CD14-positive monocyte (primary cell): ENCODE measurements at regions of chr19 and their contacts with region 1.

Region 1: GRCh38 chr19:39671738-39672363 is 16.1 kb downstream of the LGALS16 start:
- DNase-seq: peak; percentile 24 to 51 (median 38)
- H3K4me3 ChIP-seq: no peak overlapping the region
- H3K4me3 Mint-ChIP-seq: no peak overlapping the region
- H3K27ac ChIP-seq: no peak overlapping the region
- H3K27ac Mint-ChIP-seq: no peak overlapping the region
- H3K4me1 ChIP-seq: no peaks in the 10 kb centered on the region
- H3K4me1 Mint-ChIP-seq: peaks cover 3% of the 10 kb centered on the region
- H3K27me3 ChIP-seq: peaks cover 4 to 10% of the 10 kb centered on the region in 2 donors
- H3K27me3 Mint-ChIP-seq: peaks cover 3 to 11% (median 9%) of the 10 kb centered on the region in 3 donors
- CTCF ChIP-seq: peak; percentile 52

Region 2: DNA sequence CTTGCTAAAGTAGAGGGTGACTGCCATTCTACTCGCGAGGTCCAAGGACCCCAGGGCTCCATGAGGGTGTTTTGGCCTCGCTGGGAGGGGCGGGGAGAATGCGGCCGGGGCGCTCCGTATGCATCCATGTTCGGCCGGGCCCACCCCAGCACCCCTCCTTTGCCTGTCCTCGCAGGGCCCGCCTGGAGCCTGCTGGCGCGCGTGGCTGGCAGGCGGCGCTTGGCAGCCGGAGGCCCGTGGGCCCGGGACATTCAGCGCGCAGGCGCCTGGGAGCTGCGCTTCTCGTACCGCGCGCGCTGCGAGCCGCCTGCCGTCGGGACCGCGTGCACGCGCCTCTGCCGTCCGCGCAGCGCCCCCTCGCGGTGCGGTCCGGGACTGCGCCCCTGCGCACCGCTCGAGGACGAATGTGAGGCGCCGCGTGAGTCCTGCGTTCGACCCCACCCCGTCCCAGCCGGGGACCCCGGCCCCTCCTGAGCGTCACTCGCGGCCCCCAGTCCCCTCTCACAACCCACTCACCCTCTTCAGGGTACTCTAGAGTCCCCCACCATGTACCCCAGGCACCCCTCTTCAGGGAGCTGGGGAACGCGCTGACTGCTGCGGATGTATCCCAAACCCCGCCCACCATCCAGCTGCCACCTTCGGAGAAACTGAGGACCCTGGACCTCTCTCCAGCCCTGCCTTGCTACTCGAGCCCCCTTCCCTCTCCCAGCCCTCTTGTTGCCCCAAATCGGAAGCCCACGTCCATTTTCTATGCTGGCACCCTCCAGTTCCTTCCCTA is 169.0 kb before region 1 on chr19:
- intact Hi-C with region 1: loop called in 1 of 2 experiments (anchors 10 kb)
- DNase-seq: peak; percentile 68 to 81 (median 77)
- H3K4me3 ChIP-seq: no peak overlapping the region
- H3K4me3 Mint-ChIP-seq: peak overlapping the region in 1 of 2 donors; percentile 52
- H3K27ac ChIP-seq: no peak overlapping the region
- H3K27ac Mint-ChIP-seq: no peak overlapping the region
- H3K4me1 ChIP-seq: peaks cover 10 to 15% of the 10 kb centered on the region in 2 donors
- H3K4me1 Mint-ChIP-seq: peaks cover 19% of the 10 kb centered on the region
- H3K27me3 ChIP-seq: peaks cover 36 to 78% of the 10 kb centered on the region in 2 donors
- H3K27me3 Mint-ChIP-seq: peaks cover 69 to 89% (median 77%) of the 10 kb centered on the region in 3 donors
- CTCF ChIP-seq: peak; percentile 95

Region 3: DNA sequence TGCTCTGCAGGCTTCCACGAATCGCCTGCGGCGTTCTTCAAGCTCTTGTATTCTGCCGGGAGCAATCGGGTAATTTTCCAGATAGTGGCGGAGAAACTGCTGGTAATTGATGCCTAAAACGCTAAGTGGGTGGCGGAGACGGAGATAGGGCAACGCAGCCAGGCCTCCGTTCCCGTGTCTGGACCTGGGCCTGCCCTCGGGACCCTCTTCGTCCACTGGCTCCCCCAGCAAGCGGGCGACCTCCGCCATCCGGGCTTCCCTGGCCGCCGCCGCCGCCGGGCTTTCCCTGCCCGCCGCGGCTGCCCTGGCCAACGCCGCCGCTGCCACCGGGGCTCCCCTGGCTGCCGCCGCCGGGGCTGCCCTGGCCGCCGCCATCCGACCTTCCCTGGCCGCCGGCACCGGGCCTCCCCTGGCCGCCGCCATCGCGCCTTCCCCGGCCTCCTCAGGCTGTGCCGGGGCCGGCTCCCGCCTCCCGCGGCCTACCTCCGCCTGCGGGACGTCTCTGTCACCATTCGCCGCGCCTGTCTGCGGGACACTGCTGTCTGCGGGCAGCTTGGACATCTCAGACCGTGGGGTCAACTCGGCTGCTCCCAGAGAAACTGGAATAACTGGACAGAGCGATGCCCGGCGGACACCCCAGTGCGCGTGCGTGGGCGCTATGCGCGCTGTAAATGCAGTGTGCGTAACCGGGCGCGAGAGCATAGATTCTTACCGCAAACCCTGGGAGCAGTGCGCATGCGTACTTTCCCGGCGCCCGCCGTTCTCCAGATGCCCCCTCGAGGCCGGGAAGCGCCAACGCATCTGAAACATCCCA is 132.1 kb before region 1 on chr19 and contains the start of gene EID2:
- intact Hi-C with region 1: no loop called
- DNase-seq: peak; percentile 95 to 96 (median 95)
- H3K4me3 ChIP-seq: peak within 1 kb of the TSS; percentile 72 to 90 (median 79)
- H3K4me3 Mint-ChIP-seq: peak within 1 kb of the TSS; percentile 96
- H3K27ac ChIP-seq: peak within 1 kb of the TSS; percentile 83 to 87
- H3K27ac Mint-ChIP-seq: peak within 1 kb of the TSS; percentile 89 to 98 (median 95)
- H3K4me1 ChIP-seq: peaks cover 12 to 18% of the 10 kb centered on the region in 2 donors
- H3K4me1 Mint-ChIP-seq: peaks cover 25% of the 10 kb centered on the region
- H3K27me3 ChIP-seq: no peaks in the 10 kb centered on the region
- H3K27me3 Mint-ChIP-seq: peaks cover 0 to 12% (median 4%) of the 10 kb centered on the region in 3 donors
- CTCF ChIP-seq: peak; percentile 86
- polyA plus RNA-seq, gene EID2: 5.8 to 20.4 (median 12.5) TPM